ENCODE measurements at regions of chr1 and their contacts with region 1.

Region 1: GRCh38 chr1:165144757-165145397 is 211.6 kb downstream of the LMX1A start:
- DNase-seq: no peak

Region 2: DNA sequence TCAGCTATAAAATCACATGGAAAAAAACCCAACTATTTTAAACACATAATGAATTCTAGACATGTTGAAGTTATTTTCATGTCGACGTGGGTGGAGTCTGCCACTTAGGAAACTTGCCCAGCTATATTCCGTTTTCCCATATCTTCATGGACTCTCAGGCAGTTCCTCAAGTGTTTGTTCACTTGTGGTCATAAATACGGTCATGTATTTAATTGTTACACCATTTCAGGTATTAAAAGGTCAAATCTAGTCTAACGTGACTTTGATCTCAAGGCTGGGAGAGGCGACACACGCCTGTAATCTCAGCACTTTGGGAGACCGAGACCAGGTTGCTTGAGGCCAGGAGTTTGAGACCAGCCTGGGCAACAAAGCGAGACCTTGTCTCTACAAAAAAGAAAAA is 239.0 kb before region 1 on chr1:
- intact Hi-C with region 1: no loop called
- DNase-seq: no peak

Region 3: GRCh38 chr1:165367375-165367993 is 222.6 kb after region 1 on chr1:
- intact Hi-C with region 1: loop called (anchors 5 kb)
- DNase-seq: peak; percentile 83

Measured in cardiac septum (tissue), 1 donor.